GM18951 (cell line): ENCODE measurements at regions of chr10 and their contacts with region 1.

Region 1: GRCh38 chr10:49518982-49519578 is 19.8 kb downstream of the ERCC6 start:
- POLR2A ChIP-seq: no peak

Region 2: DNA sequence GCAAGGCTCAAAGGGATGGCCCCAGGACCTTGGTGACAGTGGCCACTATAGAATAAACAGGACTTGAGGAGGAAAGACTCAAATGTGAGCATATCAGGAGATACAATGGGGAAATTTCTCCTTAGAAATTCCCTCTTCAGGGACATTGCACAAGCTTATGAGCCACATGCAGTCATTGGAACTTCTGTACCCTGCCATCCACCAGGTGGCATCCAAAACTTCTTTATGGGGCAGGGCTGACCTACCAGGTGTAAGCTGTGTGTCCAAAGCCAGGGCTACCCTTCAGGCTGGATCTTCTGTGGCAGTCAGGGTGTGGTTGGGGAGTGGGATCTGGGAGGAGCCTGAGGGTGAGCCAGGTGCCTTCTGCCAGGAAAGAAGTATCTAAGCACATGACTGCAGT is 542.9 kb before region 1 on chr10:
- in situ Hi-C with region 1: loop called (anchors 10 kb)
- POLR2A ChIP-seq: no peak

Region 3: DNA sequence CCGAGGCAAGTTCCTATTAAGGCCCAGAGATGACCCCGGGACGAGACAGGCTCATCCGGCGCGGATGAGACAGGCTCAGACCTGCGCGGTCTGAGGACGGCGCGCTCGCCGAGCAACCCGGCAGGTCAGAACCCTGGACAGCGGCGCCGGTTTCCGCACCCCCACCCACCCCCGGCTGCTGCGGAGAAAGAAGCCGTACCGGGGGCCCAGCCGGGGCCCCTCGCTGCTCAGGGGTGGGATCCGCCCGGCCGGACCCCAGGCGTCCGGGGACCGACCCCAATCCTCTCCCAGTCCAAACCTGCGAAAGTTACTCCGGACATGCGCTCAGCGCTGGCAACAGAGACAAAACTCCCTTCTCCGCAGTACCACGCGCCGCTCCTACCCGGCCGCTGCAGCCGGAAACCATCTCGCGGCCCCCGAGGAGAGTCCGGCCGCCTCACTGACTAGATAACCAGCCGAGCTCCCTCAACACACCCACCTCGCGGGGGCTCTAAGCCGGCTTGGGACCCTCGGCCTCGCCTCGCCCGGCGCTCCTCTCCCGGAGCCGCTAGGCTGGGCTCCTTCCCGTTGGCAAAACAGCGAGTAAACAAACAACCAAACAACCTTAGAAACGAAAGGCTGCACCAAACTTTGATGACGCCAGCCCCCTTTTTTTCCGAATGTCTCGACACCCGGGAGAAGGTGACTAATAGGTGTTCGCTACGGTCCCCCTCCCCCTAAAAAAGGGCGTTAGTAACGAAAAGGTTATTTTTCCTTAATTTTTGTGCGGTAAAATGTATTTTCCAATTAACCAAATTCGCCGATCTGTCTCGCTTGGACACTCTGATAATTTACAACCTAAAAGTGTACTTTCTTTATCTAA is 120.8 kb before region 1 on chr10:
- in situ Hi-C with region 1: loop called (anchors 10 kb)
- POLR2A ChIP-seq: no peak